Natural killer cell (primary cell): ENCODE measurements at regions of chr5 and their contacts with region 1.

Region 1: DNA sequence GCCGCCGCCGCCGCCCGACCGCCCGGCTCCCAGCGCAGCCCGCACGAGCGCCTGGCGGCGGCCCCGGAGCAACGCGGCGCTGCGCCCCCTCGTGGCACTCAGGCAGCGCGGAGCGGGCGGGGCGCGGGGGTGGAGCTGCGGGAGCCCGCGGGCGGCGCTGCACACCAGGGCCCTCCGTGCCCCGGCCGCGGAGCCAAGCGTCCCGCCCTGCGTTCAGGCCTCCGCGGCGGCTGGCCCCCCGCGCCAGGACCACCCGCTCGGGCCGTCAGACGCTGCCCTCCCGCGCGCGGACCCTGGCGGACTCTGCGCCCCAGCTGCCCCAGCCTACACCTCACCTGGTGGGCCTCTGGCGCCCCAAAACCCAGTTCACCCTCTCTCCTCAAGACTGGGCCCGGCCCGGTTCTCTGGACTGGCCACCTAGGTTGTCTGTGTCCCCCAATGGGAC is at the start of gene RASGEF1C:
- DNase-seq: peak; percentile 71 to 82
- ATAC-seq: peak; percentile 88 to 99 (median 99)
- H3K4me3 ChIP-seq: no peak within 1 kb of the TSS
- H3K4me3 Mint-ChIP-seq: peak within 1 kb of the TSS; percentile 73
- H3K27ac ChIP-seq: no peak within 1 kb of the TSS
- H3K27ac Mint-ChIP-seq: no peak within 1 kb of the TSS
- H3K4me1 ChIP-seq: peaks cover 8% of the 10 kb centered on the region
- H3K4me1 Mint-ChIP-seq: peaks cover 8 to 13% of the 10 kb centered on the region in 2 donors
- H3K27me3 ChIP-seq: peaks cover 18% of the 10 kb centered on the region
- H3K27me3 Mint-ChIP-seq: peaks cover 27 to 38% of the 10 kb centered on the region in 2 donors
- CTCF ChIP-seq: peak; percentile 30
- total RNA-seq, gene RASGEF1C: not detected

Region 2: DNA sequence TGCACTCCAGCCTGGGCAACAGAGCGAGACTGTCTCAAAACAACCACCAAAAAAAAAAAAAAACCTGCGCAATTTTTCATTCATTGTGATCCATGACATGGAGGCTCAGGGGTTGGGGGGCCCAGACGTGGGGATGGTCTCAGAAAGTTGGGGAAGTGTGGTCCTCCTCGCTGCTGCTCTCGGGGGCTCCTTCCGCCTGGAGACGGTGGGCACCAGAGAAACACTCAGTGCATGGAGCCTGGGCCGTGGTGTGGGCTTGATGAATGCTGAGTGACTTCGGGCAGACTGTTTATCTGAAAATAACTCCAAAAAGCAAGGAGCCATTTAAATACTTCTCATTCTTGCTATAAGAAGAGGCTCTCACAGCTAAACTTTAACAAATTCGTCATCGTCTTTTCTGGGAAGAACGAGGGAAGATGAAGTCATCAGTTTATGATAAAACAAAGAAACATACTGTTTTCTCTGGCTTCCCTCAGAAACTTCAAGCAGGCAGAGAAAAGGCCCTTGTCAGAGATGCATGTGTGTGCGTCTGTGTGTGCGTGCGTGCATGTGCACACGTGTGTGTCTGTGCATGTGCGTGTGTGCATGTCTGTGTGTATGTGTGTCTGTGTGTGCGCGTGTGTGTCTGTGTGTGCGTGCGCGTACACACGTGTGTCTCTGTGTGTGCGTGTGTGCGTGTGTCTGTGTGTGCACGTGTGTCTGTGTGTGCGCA is 35.1 kb before region 1 on chr5:
- intact Hi-C with region 1: no loop called
- DNase-seq: no peak
- ATAC-seq: no peak
- H3K4me3 ChIP-seq: no peak overlapping the region
- H3K4me3 Mint-ChIP-seq: no peak overlapping the region
- H3K27ac ChIP-seq: no peak overlapping the region
- H3K27ac Mint-ChIP-seq: no peak overlapping the region
- H3K4me1 ChIP-seq: no peaks in the 10 kb centered on the region
- H3K4me1 Mint-ChIP-seq: no peaks in the 10 kb centered on the region
- H3K27me3 ChIP-seq: no peaks in the 10 kb centered on the region
- H3K27me3 Mint-ChIP-seq: no peaks in the 10 kb centered on the region
- CTCF ChIP-seq: no peak

Region 3: GRCh38 chr5:180315762-180316212 is 106.6 kb after region 1 on chr5:
- intact Hi-C with region 1: loop called (anchors 10 kb)
- DNase-seq: peak; percentile 74 to 85
- ATAC-seq: peak; percentile 64 to 85 (median 84)
- H3K4me3 ChIP-seq: no peak overlapping the region
- H3K4me3 Mint-ChIP-seq: no peak overlapping the region
- H3K27ac ChIP-seq: no peak overlapping the region
- H3K27ac Mint-ChIP-seq: no peak overlapping the region
- H3K4me1 ChIP-seq: no peaks in the 10 kb centered on the region
- H3K4me1 Mint-ChIP-seq: no peaks in the 10 kb centered on the region
- H3K27me3 ChIP-seq: no peaks in the 10 kb centered on the region
- H3K27me3 Mint-ChIP-seq: peaks cover 0 to 10% of the 10 kb centered on the region in 2 donors
- CTCF ChIP-seq: peak; percentile 96